A673 (cell line): ENCODE measurements at regions of chr2 and their contacts with region 1.

Region 1: DNA sequence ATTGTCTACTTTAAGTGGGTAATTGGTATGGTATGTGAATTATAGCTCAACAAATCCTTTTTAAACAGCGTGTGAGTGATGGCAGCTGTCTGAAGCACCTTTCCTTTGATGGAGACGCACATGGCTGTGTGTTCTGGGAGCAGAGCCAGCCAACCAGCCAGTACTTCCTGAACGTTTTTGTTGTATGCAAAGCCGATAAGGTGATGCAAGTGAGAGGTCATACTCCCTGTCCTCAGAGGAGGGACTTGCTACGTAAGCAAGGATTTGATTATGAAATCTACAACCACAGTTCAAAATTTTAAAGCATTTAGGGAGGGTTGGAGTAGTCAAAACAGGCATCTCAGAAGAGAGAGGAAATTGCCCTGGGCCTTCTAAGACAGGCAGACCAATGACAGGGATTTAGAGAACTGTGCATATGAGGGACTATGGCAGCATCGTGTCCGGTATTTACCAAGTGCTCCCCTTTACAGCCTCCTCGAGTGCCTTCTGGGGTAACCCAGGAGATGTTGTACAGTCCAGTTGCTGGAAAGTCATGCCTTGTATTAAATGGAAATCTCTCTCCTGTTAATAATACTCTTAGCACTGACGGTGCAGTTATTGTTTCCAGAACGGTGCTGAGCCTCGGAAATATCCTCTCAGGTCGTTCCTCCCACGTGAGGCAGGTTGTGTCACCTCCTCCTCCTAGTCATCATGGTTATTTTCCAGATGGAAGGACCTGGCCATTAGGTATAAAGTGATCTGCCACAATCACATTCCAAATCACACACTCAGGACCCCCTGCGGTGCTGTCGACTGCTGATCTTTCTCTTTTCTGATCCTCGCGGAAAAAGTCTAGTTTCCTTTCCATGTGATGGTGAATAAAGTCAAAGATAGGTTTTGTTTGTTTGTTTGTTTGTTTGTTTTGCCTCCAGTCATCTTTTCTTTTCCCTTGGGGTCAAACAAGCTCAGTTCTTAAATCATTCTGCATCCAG is 28.4 kb downstream of the ARHGEF4 start:
- DNase-seq: peak; percentile 79
- H3K4me3 ChIP-seq: no peak overlapping the region
- H3K27ac ChIP-seq: peak overlapping the region; percentile 60
- H3K4me1 ChIP-seq: peaks cover 15% of the 10 kb centered on the region
- H3K27me3 ChIP-seq: no peaks in the 10 kb centered on the region
- CTCF ChIP-seq: no peak

Region 2: DNA sequence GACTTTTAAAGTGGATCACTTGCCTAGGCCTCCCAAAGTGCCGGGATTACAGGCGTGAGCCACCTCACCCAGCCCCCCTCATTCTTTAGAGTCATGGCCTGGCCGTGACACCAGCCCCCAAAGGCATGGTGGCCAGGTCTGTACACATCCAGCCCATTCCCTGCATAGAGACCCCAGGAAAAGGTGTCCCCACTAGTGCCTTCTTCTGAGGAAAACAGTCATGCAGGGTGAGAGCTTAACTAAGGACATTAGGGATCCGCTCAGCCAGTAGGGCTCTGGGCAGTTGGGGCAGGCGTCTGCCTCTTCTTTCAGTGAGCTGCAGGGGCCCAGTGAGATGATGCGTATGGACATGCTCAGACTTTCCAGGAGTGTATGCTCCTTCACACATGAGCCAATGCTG is 115.5 kb before region 1 on chr2:
- CTCF ChIA-PET with region 1: interaction called, 10 read pairs
- POLR2A ChIA-PET with region 1: no interaction called
- intact Hi-C with region 1: no loop called
- DNase-seq: no peak
- H3K4me3 ChIP-seq: no peak overlapping the region
- H3K27ac ChIP-seq: no peak overlapping the region
- H3K4me1 ChIP-seq: no peaks in the 10 kb centered on the region
- H3K27me3 ChIP-seq: peaks cover 48% of the 10 kb centered on the region
- CTCF ChIP-seq: no peak